Dendritic cell treated with granulocyte-macrophage colony-stimulating factor and Interleukin-4, amounts not matched to agents 40 ng/mL and 50 ng/mL, for 4 days (primary cell): ENCODE measurements at regions of chr11 and their contacts with region 1.

Region 1: GRCh38 chr11:68038718-68039525 is at the start of gene TCIRG1:
- H3K4me3 Mint-ChIP-seq: peak within 1 kb of the TSS; percentile 93
- H3K27ac Mint-ChIP-seq: peak within 1 kb of the TSS; percentile 97
- H3K4me1 Mint-ChIP-seq: peaks cover 73% of the 10 kb centered on the region
- H3K27me3 Mint-ChIP-seq: no peaks in the 10 kb centered on the region

Region 2: DNA sequence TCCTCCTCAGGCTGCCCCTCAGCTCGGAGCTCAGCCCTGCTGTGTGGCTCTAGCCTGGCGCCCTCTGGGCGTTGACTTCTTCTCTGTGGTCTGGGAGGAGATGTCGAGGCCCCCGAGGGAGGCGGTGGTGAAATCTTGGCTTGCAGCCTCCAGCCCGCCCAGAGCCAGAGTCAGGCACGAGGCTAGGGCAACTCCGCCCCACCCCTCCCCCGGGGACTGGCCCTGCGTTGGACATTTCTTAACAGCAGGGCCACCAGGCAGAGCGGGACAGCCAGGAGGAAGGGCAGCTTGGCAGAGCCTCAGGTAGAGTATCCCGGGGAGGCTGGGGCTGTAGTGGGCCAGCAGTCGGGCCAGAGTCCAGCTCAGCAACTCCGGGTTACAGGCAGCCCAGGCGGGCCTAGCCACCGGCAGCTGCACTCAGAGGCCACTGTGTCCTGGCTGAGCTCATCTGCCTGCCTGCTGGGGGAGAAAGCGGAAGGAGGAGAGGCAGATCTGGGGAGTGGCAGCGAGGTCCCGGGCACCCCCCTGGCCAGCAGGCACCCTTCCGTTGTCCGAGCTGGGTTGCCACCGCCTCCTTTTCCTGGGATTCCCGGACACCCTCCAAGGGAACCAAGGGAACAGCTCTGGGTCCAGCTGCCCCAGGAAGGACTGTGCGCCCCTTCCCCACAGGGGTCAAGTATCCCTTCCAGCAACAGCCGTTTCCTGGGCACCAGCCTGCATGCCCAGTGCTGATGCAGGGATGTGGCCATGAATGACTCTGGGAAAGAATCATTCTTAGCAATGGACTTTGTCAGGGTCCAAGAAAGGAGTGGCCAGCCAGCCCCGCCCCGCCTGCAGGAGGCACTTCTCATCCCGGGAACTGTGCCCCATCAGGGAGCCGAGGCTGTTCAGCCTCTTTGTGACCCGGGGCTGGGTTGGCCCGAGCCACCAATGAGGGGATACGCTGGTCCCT is 28.6 kb before region 1 on chr11 and contains the start of gene ALDH3B1:
- intact Hi-C with region 1: loop called (anchors 2 kb)
- H3K4me3 Mint-ChIP-seq: peak within 1 kb of the TSS; percentile 87
- H3K27ac Mint-ChIP-seq: peak within 1 kb of the TSS; percentile 99
- H3K4me1 Mint-ChIP-seq: peaks cover 91% of the 10 kb centered on the region
- H3K27me3 Mint-ChIP-seq: no peaks in the 10 kb centered on the region